Body of pancreas (tissue), 4 donors: ENCODE measurements at regions of chr5 and their contacts with region 1.

Region 1: GRCh38 chr5:139795074-139796001 is at the start of gene PSD2:
- DNase-seq: peak; percentile 42 to 59 (median 46)
- ATAC-seq: peak; percentile 68
- H3K4me3 ChIP-seq: no peak within 1 kb of the TSS
- H3K27ac ChIP-seq: no peak within 1 kb of the TSS
- H3K4me1 ChIP-seq: peaks cover 6% of the 10 kb centered on the region
- H3K27me3 ChIP-seq: peaks cover 0 to 20% of the 10 kb centered on the region in 2 donors
- CTCF ChIP-seq: no peak
- POLR2A ChIP-seq: no peak
- total RNA-seq, gene PSD2: 0.52 TPM in 1 of 2 donors, not detected in the other

Region 2: DNA sequence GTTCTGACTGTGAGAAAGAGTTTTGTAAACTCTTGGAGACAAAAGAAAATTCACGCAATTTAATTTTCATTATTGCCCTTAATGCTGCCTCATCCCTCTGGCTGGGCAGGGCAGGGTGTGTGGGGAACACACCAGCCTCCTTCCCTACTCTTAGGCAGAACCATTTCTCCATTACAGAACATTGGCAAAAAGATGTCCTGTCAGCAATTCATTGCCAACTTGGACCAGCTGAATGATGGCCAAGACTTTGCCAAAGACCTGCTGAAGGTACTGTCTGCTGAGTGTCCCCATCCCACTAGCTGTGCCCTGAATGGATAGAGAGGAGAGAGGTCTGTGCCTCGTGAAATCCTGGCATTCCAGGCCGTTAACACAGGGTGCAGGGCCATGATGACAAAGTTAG is 38.2 kb after region 1 on chr5:
- intact Hi-C with region 1: loop called (anchors 5 kb)
- DNase-seq: no peak
- ATAC-seq: no peak
- H3K4me3 ChIP-seq: no peak overlapping the region
- H3K27ac ChIP-seq: no peak overlapping the region
- H3K4me1 ChIP-seq: no peaks in the 10 kb centered on the region
- H3K27me3 ChIP-seq: no peaks in the 10 kb centered on the region
- CTCF ChIP-seq: no peak
- POLR2A ChIP-seq: no peak

Region 3: DNA sequence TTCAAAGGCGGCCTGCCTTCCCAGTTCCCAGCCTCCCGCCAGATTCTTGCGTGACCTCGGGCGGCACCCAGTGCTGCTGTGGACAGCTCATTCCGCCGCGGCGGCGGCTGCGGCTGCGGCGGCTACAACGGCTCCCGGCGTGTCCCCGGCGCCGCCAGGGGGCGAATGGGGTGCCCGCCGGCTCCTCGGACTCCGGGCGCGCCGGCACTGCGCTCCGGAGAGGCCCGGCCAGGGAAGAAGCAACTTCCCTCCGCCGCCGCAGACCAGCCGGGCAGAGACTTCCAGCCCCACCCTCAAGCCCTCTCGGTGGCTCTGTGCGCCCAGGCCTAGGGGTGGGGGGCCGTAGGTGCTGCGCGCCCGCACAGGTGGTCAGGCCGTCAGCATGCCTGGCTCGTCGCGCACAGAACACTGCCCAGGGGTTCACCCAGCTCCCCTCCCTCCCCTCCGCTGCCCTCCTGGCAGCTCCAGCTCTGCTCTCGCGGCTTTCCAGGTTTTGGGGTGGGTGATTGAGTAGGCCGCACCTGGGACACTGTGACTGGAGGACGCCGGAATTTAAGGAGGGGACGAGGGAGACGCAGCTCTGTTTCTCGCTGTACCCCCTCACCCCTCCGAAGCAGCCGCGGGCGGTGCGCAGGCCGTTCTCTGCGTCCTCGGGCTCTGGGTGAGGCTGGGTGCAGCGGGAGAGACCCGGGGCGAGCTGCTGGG is 350.6 kb after region 1 on chr5:
- intact Hi-C with region 1: no loop called
- DNase-seq: peak; percentile 77 to 85 (median 78)
- ATAC-seq: peak; percentile 93
- H3K4me3 ChIP-seq: no peak overlapping the region
- H3K27ac ChIP-seq: no peak overlapping the region
- H3K4me1 ChIP-seq: peaks cover 17% of the 10 kb centered on the region
- H3K27me3 ChIP-seq: no peaks in the 10 kb centered on the region
- CTCF ChIP-seq: peak; percentile 39 to 93 (median 74)
- POLR2A ChIP-seq: no peak